ENCODE measurements at regions of chr15 and their contacts with region 1.

Region 1: GRCh38 chr15:91921188-91921842 is 67.8 kb downstream of the SLCO3A1 start:
- DNase-seq: no peak
- ATAC-seq: no peak

Region 2: GRCh38 chr15:91867581-91868026 is 53.7 kb before region 1 on chr15:
- intact Hi-C with region 1: loop called (anchors 5 kb)
- DNase-seq: peak; percentile 77
- ATAC-seq: peak; percentile 60

Region 3: GRCh38 chr15:91970142-91970541 is 48.8 kb after region 1 on chr15:
- intact Hi-C with region 1: loop called (anchors 5 kb)
- DNase-seq: peak; percentile 90
- ATAC-seq: peak; percentile 89

Measured in Right ventricle myocardium inferior (tissue), 1 donor.